Endothelial cell of umbilical vein (primary cell): ENCODE measurements at regions of chr12 and their contacts with region 1.

Region 1: GRCh38 chr12:116910645-116911451 is at the start of gene FBXW8:
- DNase-seq: peak; percentile 80
- H3K4me3 ChIP-seq: peak within 1 kb of the TSS; percentile 43 to 75 (median 67)
- H3K27ac ChIP-seq: peak within 1 kb of the TSS; percentile 53
- H3K4me1 ChIP-seq: peaks cover 5% of the 10 kb centered on the region
- H3K27me3 ChIP-seq: peaks cover 8 to 11% of the 10 kb centered on the region in 2 experiments
- CTCF ChIP-seq: no peak
- POLR2A ChIP-seq: peak; percentile 58
- total RNA-seq, gene FBXW8: 15.4 and 16.9 TPM in 2 replicates

Region 2: DNA sequence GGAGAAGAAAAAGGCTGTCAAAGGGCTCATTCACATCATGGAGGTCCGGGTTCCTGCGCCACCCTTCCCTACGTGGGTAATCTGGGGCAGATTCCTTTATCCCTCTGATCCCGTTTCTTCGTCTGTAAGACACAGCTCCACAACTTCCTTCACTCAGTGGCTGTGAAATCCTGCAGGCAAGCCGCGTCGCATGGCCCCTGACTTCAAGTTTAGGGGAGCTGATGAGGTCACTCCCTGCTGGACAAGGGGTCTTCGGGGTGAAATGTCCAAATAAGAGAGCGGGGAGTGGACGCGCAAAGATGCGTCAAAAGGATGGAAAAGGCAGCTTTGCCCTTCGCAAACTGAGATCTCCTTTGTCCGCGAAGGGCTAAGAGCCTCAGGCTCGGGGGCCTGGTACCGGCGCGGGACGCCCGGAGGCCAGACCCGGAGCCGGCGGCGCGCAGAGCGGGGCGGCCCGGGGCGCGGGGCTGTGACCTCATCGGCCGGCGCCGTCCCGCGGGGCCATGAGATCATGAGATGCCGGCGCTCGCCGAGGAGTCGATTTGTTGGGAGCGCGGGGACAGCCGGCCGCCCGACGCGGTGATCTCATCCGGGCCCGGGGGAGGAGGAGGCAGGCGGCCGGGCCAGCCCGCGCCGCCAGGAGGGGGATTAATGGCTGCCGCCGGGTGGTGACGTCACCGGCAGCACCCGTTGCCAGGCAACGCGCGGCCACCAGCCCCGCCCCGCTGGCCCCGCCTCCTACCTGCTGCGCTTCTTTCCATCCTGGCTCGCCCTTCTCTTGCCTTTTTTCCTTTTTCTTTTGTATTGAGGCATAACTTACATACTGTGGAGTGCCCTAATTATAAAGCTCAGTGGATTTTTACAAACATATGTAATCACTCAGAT is 91.7 kb before region 1 on chr12:
- CTCF ChIA-PET with region 1: no interaction called
- POLR2A ChIA-PET with region 1: no interaction called
- dilution Hi-C with region 1: no loop called
- intact Hi-C with region 1: loop called (anchors 2 kb)
- DNase-seq: peak; percentile 89
- H3K4me3 ChIP-seq: peak overlapping the region; percentile 62 to 84 (median 76)
- H3K27ac ChIP-seq: peak overlapping the region; percentile 86
- H3K4me1 ChIP-seq: peaks cover 13% of the 10 kb centered on the region
- H3K27me3 ChIP-seq: peaks cover 0 to 1% of the 10 kb centered on the region in 2 experiments
- CTCF ChIP-seq: no peak
- POLR2A ChIP-seq: peak; percentile 68

Region 3: GRCh38 chr12:117011988-117012805 is 101.3 kb after region 1 on chr12:
- CTCF ChIA-PET with region 1: no interaction called
- POLR2A ChIA-PET with region 1: no interaction called
- dilution Hi-C with region 1: no loop called
- intact Hi-C with region 1: loop called (anchors 5 kb)
- DNase-seq: no peak
- H3K4me3 ChIP-seq: no peak overlapping the region
- H3K27ac ChIP-seq: no peak overlapping the region
- H3K4me1 ChIP-seq: peaks cover 13% of the 10 kb centered on the region
- H3K27me3 ChIP-seq: no peaks in the 10 kb centered on the region
- CTCF ChIP-seq: no peak
- POLR2A ChIP-seq: no peak

Region 4: GRCh38 chr12:117155278-117156060 is 244.6 kb after region 1 on chr12:
- CTCF ChIA-PET with region 1: no interaction called
- POLR2A ChIA-PET with region 1: no interaction called
- dilution Hi-C with region 1: no loop called
- intact Hi-C with region 1: loop called (anchors 10 kb)
- DNase-seq: peak; percentile 12
- H3K4me3 ChIP-seq: no peak overlapping the region
- H3K27ac ChIP-seq: no peak overlapping the region
- H3K4me1 ChIP-seq: no peaks in the 10 kb centered on the region
- H3K27me3 ChIP-seq: no peaks in the 10 kb centered on the region
- CTCF ChIP-seq: peak; percentile 66 to 78
- POLR2A ChIP-seq: no peak